ENCODE measurements at regions of chr12 and their contacts with region 1.

Region 1: GRCh38 chr12:16076553-16076952 is 165.4 kb downstream of the DERA start:
- DNase-seq: no peak
- ATAC-seq: peak in 2 of 4 donors; percentile 22 to 41
- H3K4me3 ChIP-seq: no peak overlapping the region
- H3K27ac ChIP-seq: no peak overlapping the region
- H3K4me1 ChIP-seq: no peaks in the 10 kb centered on the region
- H3K27me3 ChIP-seq: no peaks in the 10 kb centered on the region
- CTCF ChIP-seq: peak in 6 of 12 donors; percentile 17 to 46 (median 37)
- POLR2A ChIP-seq: no peak

Region 2: DNA sequence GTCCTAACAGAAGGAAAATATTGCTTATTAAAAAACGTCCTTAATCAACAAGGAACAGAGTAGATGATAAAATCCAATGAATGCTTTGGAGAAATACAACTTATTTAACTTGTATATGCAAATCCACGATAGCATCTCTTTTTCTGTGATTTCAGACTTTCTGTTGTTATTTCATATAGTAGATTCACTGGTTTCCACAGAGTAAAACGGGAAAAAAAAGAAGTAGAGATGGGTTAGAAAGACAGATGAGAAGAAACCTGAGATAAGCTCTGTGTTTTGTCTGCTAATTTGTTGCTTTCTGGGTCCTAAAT is 1565.7 kb after region 1 on chr12:
- intact Hi-C with region 1: loop called in 2 of 10 experiments (anchors 10 kb)
- DNase-seq: no peak
- ATAC-seq: no peak
- H3K4me3 ChIP-seq: no peak overlapping the region
- H3K27ac ChIP-seq: no peak overlapping the region
- H3K4me1 ChIP-seq: peaks cover 0 to 3% (median 0%) of the 10 kb centered on the region in 12 donors
- H3K27me3 ChIP-seq: peaks cover 0 to 8% (median 0%) of the 10 kb centered on the region in 9 donors
- CTCF ChIP-seq: peak in 1 of 12 donors; percentile 5
- POLR2A ChIP-seq: no peak